Activated CD8-positive, alpha-beta T cell treated with anti-CD3 and anti-CD28 coated beads, Interleukin-2, amount 10 ng/mL, durations not matched to agents 7 days and 5 days (primary cell): ENCODE measurements at regions of chr2 and their contacts with region 1.

Region 1: DNA sequence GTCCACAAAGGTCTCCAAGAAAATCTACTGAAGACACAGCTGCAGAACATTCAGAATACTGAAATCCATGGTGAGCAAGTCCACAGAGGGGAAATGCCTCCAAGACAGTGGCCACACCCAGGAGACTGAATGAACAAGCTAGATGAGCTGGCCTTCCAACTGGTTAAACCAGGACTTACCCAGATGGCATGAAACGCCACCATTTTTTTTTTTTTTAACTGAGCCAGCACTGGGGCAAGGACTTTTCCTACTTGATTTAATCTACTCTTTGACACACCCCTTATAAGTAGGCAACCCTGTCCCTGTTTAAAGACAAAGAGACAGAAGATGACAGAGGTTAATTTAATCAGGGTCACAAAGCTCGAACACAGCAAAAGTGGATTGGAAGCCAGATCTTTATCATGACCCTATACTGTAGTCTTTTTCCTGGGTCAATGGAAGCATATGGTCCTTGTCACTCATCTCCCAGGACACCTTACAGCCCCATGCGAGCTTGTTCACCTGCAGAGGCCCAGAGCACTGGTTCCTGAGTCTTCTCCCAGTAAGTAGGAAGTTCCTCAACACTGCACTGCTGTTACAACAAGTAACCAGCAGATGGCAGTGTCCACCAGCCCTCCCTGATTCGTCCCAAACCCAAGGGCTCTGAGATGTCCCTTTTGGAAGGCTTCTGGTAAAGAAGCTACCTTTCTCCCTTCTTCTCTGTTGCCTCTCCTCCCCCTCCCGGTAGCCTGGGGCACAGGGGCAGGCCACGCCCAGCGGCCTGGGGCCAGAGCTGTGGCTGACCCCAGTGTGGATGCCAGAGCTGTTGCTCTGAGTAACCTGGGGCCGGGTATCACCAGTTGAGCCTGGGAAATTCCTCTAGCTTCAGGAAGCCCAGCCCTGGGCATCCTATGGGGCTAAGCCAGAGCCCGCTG is 5.6 kb upstream of the GDF7 start:
- DNase-seq: peak; percentile 76
- ATAC-seq: peak; percentile 62
- H3K4me3 Mint-ChIP-seq: no peak overlapping the region
- H3K27ac Mint-ChIP-seq: no peak overlapping the region
- H3K4me1 Mint-ChIP-seq: peaks cover 9% of the 10 kb centered on the region
- H3K27me3 Mint-ChIP-seq: peaks cover 55% of the 10 kb centered on the region

Region 2: GRCh38 chr2:20642055-20642971 is 19.0 kb before region 1 on chr2:
- CTCF ChIA-PET with region 1: interaction called, 11 read pairs
- POLR2A ChIA-PET with region 1: no interaction called
- DNase-seq: peak; percentile 78
- ATAC-seq: peak; percentile 97
- H3K4me3 Mint-ChIP-seq: no peak overlapping the region
- H3K27ac Mint-ChIP-seq: no peak overlapping the region
- H3K4me1 Mint-ChIP-seq: no peaks in the 10 kb centered on the region
- H3K27me3 Mint-ChIP-seq: no peaks in the 10 kb centered on the region

Region 3: DNA sequence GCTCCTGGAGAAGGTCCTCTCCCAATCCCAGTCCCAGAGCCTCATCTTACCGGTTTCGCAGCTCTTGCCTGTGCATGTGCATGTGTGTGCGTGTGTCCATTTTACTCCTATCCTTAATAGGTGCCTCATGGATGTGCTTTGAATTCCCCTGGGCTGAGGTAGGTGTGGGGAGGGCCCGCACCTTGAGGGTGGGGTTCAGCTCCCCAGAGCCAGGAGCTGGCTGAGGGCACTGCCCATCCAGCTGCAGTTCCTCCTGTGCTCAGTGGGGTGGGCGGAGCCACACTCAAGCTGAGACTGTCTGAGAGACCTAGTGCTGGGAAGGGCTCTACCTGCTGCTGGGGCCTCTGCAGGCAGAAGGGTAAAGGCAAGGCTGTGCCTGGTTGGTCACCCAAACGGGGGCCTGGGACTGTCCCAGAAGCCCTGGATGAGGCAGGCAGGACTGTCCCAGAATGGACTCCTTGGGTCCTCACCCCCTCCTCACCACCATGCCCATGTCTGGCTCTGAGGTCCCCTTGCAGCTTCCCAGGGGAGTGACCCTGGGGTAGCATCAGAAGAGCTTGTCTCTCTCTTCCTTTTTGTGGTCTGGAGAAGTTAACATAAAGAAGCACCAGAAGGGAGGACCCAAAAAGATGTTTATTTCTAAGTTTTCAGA is 14.5 kb after region 1 on chr2:
- CTCF ChIA-PET with region 1: interaction called, 13 read pairs
- POLR2A ChIA-PET with region 1: no interaction called
- DNase-seq: no peak
- ATAC-seq: peak; percentile 63
- H3K4me3 Mint-ChIP-seq: no peak overlapping the region
- H3K27ac Mint-ChIP-seq: no peak overlapping the region
- H3K4me1 Mint-ChIP-seq: no peaks in the 10 kb centered on the region
- H3K27me3 Mint-ChIP-seq: peaks cover 20% of the 10 kb centered on the region

Region 4: GRCh38 chr2:20698916-20699613 is 37.7 kb after region 1 on chr2:
- CTCF ChIA-PET with region 1: interaction called, 11 read pairs
- POLR2A ChIA-PET with region 1: no interaction called
- DNase-seq: no peak
- ATAC-seq: no peak
- H3K4me3 Mint-ChIP-seq: no peak overlapping the region
- H3K27ac Mint-ChIP-seq: no peak overlapping the region
- H3K4me1 Mint-ChIP-seq: peaks cover 12% of the 10 kb centered on the region
- H3K27me3 Mint-ChIP-seq: no peaks in the 10 kb centered on the region

Region 5: GRCh38 chr2:20758997-20759396 is 97.7 kb after region 1 on chr2:
- CTCF ChIA-PET with region 1: interaction called, 10 read pairs
- POLR2A ChIA-PET with region 1: no interaction called
- DNase-seq: no peak
- ATAC-seq: no peak
- H3K4me3 Mint-ChIP-seq: no peak overlapping the region
- H3K27ac Mint-ChIP-seq: no peak overlapping the region
- H3K4me1 Mint-ChIP-seq: no peaks in the 10 kb centered on the region
- H3K27me3 Mint-ChIP-seq: no peaks in the 10 kb centered on the region

Region 6: DNA sequence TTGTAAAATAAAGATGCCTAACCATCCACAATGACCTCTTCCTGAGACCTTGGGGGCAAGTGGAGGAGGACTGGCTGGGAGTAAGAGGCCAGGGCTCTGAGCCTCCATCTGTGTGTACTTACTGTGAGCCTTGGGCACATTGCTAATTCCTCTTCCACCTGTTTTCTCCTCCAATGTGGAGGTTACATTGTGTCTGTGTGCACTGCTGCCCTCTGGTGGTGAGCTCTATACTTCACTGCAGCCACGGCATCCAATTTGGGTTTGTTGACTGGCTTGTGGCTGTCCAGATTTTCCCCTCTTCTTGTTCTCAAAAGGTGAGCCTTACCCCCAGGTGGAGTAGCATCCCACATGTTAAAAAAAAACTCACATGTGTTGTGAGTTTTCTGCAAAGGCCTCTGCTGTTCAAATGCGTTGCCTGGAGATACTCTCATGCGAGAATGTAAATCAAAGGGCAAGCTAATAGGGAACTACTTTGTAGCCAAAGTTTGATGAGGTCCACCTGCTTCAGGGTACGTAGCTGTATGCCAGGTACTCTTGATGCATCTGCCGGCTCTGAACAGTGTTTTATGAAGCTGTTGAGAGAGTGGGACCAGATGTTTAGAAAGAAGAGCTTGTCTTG is 301.7 kb after region 1 on chr2:
- CTCF ChIA-PET with region 1: interaction called, 172 read pairs
- POLR2A ChIA-PET with region 1: interaction called, 3 read pairs
- DNase-seq: peak; percentile 74
- ATAC-seq: peak; percentile 75
- H3K4me3 Mint-ChIP-seq: no peak overlapping the region
- H3K27ac Mint-ChIP-seq: no peak overlapping the region
- H3K4me1 Mint-ChIP-seq: no peaks in the 10 kb centered on the region
- H3K27me3 Mint-ChIP-seq: no peaks in the 10 kb centered on the region